ENCODE measurements at regions of chr12 and their contacts with region 1.

Region 1: DNA sequence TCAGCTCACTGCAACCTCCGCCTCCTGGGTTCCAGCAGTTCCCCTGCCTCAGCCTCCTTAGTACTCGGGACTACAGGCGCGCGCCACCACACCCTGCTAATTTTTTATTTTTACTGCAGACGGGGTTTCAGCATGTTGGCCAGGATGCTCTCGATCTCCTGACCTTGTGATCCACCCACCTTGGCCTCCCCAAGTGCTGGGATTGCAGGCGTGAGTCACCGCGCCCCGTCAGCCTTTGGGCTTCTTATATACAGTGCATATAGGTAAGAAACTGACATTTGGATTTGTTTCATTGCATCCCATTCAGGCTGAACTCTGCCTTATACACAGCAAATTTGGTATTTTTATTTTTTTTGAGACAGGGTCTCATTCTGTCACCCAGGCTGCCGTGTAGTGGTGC is 176.8 kb downstream of the ERC1 start:
- DNase-seq: no peak
- H3K4me3 ChIP-seq: no peak overlapping the region
- H3K27ac ChIP-seq: no peak overlapping the region
- H3K4me1 ChIP-seq: no peaks in the 10 kb centered on the region
- H3K27me3 ChIP-seq: no peaks in the 10 kb centered on the region
- CTCF ChIP-seq: no peak
- POLR2A ChIP-seq: no peak

Region 2: DNA sequence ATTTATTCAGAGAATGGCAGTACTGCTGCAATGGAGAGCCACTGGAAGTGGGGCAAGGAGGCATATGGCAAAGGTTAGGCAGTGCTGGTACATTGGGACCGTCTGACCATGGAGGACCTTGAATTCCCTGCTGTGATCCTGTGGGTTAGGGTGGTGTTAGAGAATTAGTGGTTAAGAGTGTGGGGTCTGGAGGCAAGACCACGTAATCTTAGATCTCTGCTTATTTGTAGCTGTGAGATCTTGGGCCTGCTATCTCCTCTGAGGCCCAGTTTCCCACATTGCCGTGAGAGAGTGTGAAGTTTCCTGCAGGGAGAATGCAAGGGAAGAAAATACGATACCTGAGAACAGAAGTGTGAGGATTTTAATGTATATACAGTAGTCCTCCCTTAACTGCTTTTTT is 29.1 kb before region 1 on chr12:
- intact Hi-C with region 1: loop called (anchors 2 kb)
- DNase-seq: no peak
- H3K4me3 ChIP-seq: no peak overlapping the region
- H3K27ac ChIP-seq: no peak overlapping the region
- H3K4me1 ChIP-seq: no peaks in the 10 kb centered on the region
- H3K27me3 ChIP-seq: no peaks in the 10 kb centered on the region
- CTCF ChIP-seq: no peak
- POLR2A ChIP-seq: no peak

Region 3: DNA sequence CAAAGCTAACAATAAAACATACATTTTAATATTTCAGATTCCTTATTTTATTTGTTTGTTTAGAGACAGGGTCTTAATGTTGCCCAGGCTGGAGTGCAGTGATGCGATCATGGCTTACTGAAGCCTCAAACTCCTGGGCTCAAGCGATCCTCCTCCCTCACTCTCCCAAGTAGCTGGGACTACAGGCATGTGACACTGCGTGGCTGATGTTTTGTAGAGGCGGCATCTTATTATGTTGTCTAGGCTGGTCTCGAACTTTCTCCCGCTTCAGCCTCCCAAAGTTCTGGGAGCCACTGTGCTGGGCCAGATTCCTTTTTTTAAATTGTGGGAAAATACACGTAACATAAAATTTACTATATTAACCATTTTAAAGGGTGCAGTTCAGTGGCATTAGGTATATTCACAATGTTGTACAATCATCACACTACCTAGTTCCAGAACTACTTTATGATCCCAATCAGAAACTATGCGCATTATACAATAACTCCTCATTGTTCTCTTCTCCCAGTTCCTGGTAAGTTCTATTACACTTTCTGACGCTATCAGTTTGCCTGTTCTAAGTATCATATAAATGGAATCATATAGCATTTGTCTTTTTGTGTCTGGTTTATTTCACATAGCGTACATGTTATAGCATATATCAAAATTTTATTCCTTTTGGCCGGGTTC is 563.4 kb after region 1 on chr12:
- intact Hi-C with region 1: no loop called
- DNase-seq: no peak
- H3K4me3 ChIP-seq: no peak overlapping the region
- H3K27ac ChIP-seq: no peak overlapping the region
- H3K4me1 ChIP-seq: no peaks in the 10 kb centered on the region
- H3K27me3 ChIP-seq: no peaks in the 10 kb centered on the region
- CTCF ChIP-seq: no peak
- POLR2A ChIP-seq: no peak

Measured in breast epithelium (tissue), 4 donors.